Mucosa of descending colon (tissue), 3 donors: ENCODE measurements at regions of chr6 and their contacts with region 1.

Region 1: GRCh38 chr6:33014841-33015634 is 5.6 kb upstream of the HLA-DOA start:
- DNase-seq: peak in 1 of 3 donors; percentile 82
- ATAC-seq: peak; percentile 69
- H3K4me3 ChIP-seq: no peak overlapping the region
- H3K4me1 ChIP-seq: peaks cover 7% of the 10 kb centered on the region
- CTCF ChIP-seq: peak; percentile 46

Region 2: DNA sequence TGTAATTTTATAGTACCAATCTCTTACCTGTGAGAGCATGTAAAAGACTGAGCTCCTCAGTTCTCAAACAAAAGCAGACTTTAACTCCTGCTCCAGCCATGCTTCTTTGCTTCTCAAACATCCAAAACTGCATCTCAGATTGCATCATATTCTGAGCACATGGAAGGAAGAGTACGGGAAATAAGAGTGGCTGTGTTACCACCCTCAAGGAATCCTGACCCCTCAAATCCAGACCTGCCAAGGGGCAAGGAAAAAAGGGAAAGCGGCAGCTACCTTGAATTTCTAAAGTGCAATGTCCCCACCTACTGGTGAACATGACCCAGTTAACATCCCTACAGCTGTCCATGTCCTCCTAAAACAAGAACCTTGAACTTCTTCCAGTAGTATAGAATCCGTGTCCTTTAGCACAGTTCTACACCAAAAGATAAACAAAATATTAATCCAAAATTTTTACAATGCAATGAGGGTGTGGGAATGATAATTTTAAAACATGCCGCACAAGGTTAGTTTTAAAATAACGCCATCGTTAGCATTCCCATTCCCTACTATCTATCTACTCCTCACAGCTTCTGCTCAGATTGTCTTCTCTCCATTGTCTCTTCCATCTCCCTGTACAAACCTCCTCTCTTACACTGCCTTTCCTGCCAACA is 314.5 kb before region 1 on chr6:
- intact Hi-C with region 1: no loop called
- DNase-seq: peak in 1 of 3 donors; percentile 36
- ATAC-seq: peak; percentile 83
- H3K4me3 ChIP-seq: no peak overlapping the region
- H3K4me1 ChIP-seq: no peaks in the 10 kb centered on the region
- CTCF ChIP-seq: peak; percentile 25

Region 3: GRCh38 chr6:33075568-33076405 is 60.7 kb after region 1 on chr6 and contains the start of gene HLA-DPB1:
- intact Hi-C with region 1: loop called (anchors 10 kb)
- DNase-seq: peak in 1 of 3 donors; percentile 50
- ATAC-seq: peak; percentile 85
- H3K4me3 ChIP-seq: no peak within 1 kb of the TSS
- H3K4me1 ChIP-seq: no peaks in the 10 kb centered on the region
- CTCF ChIP-seq: no peak
- total RNA-seq, gene HLA-DPB1: 31.2 to 55.0 (median 51.2) TPM

Region 4: DNA sequence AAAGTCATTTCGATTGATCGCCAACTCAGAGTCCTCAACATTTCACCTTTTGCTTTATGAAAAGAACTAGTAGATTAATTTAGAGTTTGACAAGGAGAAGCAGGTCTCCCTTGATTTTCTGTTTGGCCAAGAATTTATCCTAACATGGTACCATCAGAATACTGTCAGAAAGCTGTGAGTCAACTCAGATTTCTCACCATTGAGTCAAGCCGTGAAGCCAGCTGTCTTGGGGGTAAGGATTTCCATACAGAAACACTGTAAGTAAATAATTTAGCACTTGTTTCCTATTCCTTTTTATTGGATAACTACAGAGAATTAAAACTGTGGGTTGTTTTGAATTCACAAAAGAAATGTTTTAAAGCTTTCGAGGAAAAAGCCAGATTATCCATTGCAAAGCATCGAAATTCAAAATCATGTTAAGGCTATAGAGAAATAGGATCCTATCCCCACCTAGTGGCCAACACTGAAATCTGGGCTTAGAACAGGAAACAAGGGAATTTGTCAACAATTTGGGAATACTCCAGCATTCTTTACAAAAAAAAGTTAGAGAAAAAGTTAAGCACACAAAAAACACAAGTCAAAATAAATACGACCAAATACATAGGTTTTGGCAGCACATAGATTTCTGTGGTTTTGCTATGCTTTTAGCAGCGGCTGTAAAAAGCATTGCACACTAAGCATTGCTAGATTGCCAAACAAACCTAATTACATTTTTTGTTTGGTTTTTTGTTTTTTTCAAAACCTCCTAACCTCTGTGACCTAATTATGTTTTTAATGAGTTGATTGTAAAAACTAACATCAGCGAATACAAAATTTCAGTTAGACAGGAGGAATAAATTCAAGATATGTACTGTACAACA is 133.0 kb after region 1 on chr6:
- intact Hi-C with region 1: loop called in 1 of 2 experiments (anchors 5 kb)
- DNase-seq: peak in 1 of 3 donors; percentile 69
- ATAC-seq: no peak
- H3K4me3 ChIP-seq: no peak overlapping the region
- H3K4me1 ChIP-seq: no peaks in the 10 kb centered on the region
- CTCF ChIP-seq: peak; percentile 63

Region 5: DNA sequence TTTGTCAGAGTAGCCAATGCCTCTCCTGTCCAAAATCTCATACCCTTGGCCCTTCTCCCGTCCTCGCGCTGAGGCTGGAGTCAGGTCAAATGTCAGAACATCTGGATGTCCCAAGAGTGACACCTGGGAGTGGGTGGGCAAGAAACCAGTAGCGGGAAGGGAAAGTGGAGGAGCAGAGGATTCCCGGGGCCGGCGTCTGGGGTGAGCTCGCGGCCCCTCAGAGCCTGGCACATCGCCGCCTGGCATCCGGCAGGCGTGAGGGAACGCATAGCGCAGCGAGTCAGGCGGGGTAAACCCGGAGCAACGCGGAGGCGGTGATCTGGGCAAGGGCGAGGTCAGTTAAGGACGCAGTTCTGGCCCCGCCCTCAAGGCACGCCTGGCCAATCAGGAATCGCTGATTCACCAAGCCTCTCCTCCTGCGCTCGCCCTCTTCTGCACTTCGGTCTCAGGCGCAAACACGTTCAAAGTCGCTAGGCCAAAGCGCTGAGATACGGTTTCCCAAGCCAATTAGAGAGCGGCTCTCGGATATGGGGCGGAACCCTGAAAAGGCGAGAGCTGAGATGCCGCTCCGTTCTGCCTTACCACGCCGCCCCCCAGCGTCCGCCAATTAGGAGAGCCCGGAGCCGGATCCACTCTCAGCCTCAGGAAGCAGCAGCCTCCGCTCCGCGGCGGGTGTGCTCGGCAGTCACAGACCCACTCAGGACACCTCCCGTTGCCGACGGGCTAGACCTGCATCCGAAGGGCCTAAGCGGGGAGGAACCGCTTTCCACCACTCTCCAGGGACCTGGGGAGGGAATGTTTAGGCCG is 234.1 kb after region 1 on chr6:
- intact Hi-C with region 1: loop called in 1 of 2 experiments (anchors 10 kb)
- DNase-seq: peak; percentile 98 to 99 (median 99)
- ATAC-seq: peak; percentile 95
- H3K4me3 ChIP-seq: peak overlapping the region; percentile 7
- H3K4me1 ChIP-seq: peaks cover 15% of the 10 kb centered on the region
- CTCF ChIP-seq: no peak